Astrocyte of the cerebellum (primary cell): ENCODE measurements at regions of chr17 and their contacts with region 1.

Region 1: DNA sequence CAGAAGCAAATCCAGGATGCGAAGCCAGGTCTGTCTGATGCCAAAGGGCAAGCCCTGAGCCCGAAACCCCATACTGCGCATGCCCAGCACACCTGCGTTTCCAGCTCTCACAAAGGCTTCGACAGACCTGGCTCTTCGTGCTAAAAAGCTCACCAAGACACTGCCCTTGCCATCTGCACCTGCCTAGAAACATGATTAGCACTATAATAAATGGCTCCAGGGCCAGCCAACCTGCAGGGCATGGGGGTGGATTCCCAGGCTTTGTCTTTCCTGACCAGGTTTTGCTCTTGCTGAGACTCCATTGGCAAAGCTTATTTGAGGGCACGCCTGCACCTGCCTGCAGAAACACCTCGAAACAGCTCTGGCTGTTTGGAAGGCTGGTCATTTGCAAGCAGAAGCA is 14.4 kb upstream of the PLD6 start:
- DNase-seq: no peak
- H3K4me3 ChIP-seq: no peak overlapping the region
- CTCF ChIP-seq: no peak

Region 2: DNA sequence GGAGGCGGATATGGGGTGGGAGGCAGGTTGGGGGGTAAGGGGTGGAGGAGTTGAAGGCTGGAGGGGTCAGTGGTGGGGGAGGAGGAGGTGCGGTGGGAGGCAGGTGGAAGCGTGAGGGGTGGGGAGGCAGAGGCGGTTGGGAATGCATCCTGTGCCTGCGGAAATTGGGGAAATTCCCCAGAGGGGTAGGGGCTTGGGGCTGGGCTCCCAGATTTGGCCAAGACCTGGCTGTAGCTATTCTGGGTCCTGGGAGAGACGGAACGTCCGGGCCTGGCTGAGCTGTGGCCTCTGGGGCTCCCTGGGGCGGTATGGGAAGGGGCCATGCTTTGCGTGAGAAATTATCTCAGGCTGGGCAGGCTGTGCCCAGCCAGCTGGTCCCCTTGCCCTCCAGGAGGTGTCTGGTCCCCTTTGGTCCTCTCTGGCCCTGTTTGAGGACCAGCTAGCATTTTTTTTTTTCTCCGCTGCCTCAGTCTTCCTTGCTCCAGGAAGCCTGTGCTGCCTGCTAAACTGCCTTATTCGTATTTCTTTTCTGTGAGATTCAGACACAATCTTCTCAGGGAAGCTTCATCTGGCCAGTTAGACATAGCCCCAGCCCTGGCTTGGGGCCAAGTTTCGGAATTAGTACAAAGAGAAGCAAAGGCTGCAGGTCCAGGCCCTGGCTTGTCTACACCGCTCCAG is 812.5 kb before region 1 on chr17:
- in situ Hi-C with region 1: no loop called
- DNase-seq: peak; percentile 43
- H3K4me3 ChIP-seq: no peak overlapping the region
- CTCF ChIP-seq: no peak

Region 3: DNA sequence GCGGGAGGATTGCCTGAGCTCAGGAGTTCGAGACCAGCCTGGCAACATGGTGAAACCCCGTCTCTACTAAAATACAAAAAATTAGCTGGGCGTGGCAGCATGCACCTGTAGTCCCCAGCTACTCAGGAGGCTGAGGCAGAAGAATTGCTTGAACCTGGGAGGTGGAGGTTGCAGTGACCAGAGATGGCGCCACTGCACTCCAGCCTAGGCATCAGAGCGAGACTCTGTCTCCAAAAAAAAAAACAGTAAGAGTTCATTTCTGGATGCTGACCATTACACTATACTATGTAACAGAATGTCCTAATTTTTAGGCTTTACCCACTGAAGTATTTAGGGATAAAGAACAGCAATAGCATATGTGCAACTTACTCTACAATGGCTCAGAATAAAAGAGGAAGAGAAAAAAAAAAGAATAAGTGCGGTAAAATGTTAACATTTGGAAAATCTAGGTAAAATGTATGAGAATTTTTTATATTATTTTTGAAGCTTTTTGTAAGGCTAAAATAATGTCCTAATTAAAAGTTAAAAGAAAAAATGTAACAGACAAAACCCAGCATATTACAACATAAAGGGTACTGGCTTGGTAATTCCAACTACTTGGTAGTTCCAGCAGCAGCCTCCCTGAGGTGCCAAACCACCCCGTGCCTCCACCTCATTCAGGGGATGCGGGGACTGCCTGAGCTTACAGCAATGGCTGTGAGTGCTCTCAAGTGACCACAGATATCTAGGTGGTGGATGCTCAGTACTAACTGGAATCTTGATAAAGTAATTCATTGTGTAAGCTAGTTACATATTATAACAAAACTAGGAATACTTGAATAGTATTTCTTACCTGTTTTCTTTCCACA is 49.6 kb after region 1 on chr17:
- in situ Hi-C with region 1: loop called (anchors 5 kb)
- DNase-seq: no peak
- H3K4me3 ChIP-seq: no peak overlapping the region
- CTCF ChIP-seq: peak; percentile 40